Left cardiac atrium (tissue), 4 donors: ENCODE measurements at regions of chr2 and their contacts with region 1.

Region 1: DNA sequence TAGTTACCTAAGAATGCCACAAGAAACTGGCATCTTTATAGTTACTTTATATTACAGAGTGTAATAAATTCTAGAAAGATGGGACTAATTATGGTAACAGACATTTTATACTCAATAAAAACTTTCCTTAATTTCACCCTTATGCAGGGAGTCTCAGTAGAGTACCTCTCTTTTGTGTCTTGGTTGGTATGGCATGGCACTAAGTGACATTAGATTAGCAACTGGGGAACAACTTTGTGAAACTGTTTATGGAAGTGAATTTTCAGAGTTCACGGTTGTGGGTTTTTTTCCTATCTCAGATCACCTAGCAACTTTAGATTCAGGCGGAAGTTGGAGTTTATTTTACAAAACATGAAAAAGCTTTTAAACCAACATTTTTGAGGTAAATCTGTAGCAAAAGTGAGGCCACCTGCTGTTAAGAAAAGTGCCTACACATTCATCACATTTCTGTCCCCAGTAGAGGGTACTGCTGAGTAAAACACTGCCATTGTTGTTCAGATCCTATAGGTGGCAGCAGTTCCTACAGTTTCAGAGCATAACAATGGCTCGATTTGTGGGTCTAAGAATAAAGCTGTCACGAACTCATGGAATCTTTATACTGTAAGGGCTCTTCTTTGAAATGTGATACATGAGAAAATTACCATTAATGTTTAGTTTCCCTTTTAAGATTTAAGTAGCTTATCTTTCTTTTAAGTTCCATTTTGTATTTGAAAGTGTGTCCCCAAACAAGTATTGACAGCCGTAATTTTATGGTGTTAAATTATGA is 117.6 kb downstream of the CAMKMT start:
- DNase-seq: no peak
- ATAC-seq: peak; percentile 89 to 92

Region 2: GRCh38 chr2:44715671-44716081 is 236.4 kb after region 1 on chr2:
- intact Hi-C with region 1: loop called in 1 of 2 experiments (anchors 10 kb)
- DNase-seq: no peak
- ATAC-seq: peak; percentile 27 to 29